CD8-positive, alpha-beta T cell (primary cell): ENCODE measurements at regions of chr11 and their contacts with region 1.

Region 1: DNA sequence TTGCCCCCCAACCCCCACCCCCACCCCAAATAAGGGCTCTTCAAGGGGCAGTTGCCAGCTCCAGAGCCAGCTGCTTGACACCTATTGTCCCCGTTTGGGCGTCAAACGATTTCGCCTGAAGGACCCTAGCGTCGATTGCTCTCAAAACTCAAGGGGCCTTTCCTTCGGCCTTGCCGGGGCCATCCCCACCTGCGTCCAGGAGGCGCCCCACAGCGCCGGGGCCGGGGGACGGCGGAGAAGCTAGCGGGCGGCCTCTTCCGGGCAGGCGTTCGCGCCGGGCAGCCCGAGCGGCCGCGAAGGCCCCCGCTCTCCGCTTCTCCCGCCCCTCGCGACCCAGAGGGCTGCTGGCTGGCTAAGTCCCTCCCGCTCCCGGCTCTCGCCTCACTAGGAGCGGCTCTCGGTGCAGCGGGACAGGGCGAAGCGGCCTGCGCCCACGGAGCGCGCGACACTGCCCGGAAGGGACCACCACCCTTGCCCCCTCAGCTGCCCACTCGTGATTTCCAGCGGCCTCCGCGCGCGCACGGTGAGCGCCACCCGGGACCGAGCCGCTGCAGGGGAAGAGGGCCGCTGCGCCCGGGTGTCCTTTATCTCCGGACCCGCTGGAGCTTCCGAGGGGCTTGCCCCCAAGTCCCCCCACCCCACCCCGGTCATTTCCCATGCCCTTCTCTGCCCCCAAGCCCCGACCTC is at the start of gene CAPRIN1:
- DNase-seq: peak; percentile 71 to 93 (median 83)
- ATAC-seq: peak; percentile 70
- H3K4me3 ChIP-seq: peak within 1 kb of the TSS; percentile 79 to 85
- H3K4me3 Mint-ChIP-seq: peak within 1 kb of the TSS; percentile 98
- H3K27ac ChIP-seq: peak within 1 kb of the TSS; percentile 98 to 99
- H3K27ac Mint-ChIP-seq: peak within 1 kb of the TSS; percentile 96
- H3K4me1 ChIP-seq: peaks cover 35% of the 10 kb centered on the region
- H3K4me1 Mint-ChIP-seq: peaks cover 29% of the 10 kb centered on the region
- H3K27me3 ChIP-seq: no peaks in the 10 kb centered on the region
- H3K27me3 Mint-ChIP-seq: peaks cover 3% of the 10 kb centered on the region
- CTCF ChIP-seq: no peak
- total RNA-seq, gene CAPRIN1: 92.8 to 102 TPM

Region 2: GRCh38 chr11:32583459-32584271 is 1467.8 kb before region 1 on chr11 and contains the start of gene EIF3M:
- CTCF ChIA-PET with region 1: no interaction called
- POLR2A ChIA-PET with region 1: no interaction called
- intact Hi-C with region 1: loop called in 1 of 2 experiments (anchors 10 kb)
- DNase-seq: peak; percentile 91 to 98 (median 95)
- ATAC-seq: peak; percentile 98
- H3K4me3 ChIP-seq: peak within 1 kb of the TSS; percentile 80 to 93
- H3K4me3 Mint-ChIP-seq: peak within 1 kb of the TSS; percentile 99
- H3K27ac ChIP-seq: peak within 1 kb of the TSS; percentile 81 to 86
- H3K27ac Mint-ChIP-seq: peak within 1 kb of the TSS; percentile 99
- H3K4me1 ChIP-seq: peaks cover 29% of the 10 kb centered on the region
- H3K4me1 Mint-ChIP-seq: peaks cover 39% of the 10 kb centered on the region
- H3K27me3 ChIP-seq: no peaks in the 10 kb centered on the region
- H3K27me3 Mint-ChIP-seq: no peaks in the 10 kb centered on the region
- CTCF ChIP-seq: no peak
- total RNA-seq, gene EIF3M: 269 to 274 TPM

Region 3: DNA sequence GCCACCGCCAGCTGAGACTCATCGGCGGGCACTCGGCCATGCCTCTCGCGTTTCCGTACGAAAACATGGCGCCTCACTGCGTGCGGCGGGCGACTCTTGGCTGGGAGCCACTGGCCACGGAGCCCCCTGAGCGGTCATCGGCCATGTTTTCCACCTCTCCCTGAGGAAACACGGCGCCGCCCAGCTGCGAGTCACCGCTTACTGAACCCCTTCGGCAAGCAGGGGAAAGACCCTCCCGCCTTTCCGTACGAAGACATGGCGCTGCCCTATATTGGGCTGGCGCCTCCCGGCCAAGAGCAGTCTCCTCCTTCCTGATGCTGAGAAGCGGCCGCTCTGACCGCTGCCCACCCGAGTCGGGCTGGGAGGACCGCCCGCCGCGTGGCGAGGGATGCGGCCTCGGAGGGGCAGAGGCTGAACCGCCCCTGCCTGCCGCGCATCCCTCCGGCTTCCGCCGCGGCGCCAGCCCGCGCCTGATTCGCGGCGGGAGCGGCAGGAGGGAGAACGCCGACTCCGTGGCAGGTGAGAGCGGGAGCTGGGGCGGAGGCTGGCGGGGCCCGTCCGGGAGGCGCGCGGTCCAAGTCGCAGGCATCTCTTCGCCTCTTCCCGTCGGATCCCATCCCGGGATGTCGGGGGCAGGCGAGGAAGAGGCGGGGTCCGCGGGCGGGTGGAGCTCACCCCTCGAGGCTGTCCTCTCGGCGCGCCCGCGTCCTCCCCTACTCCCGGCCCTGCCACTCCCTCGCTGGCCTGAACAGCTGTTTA is 1012.0 kb before region 1 on chr11 and contains the start of gene TCP11L1:
- CTCF ChIA-PET with region 1: no interaction called
- POLR2A ChIA-PET with region 1: no interaction called
- intact Hi-C with region 1: loop called (anchors 5 kb)
- DNase-seq: peak; percentile 60 to 89 (median 83)
- ATAC-seq: peak; percentile 81
- H3K4me3 ChIP-seq: peak within 1 kb of the TSS; percentile 98
- H3K4me3 Mint-ChIP-seq: peak within 1 kb of the TSS; percentile 95
- H3K27ac ChIP-seq: peak within 1 kb of the TSS; percentile 71 to 86
- H3K27ac Mint-ChIP-seq: peak within 1 kb of the TSS; percentile 91
- H3K4me1 ChIP-seq: peaks cover 10% of the 10 kb centered on the region
- H3K4me1 Mint-ChIP-seq: peaks cover 20% of the 10 kb centered on the region
- H3K27me3 ChIP-seq: no peaks in the 10 kb centered on the region
- H3K27me3 Mint-ChIP-seq: no peaks in the 10 kb centered on the region
- CTCF ChIP-seq: no peak
- total RNA-seq, gene TCP11L1: 10.9 to 12.3 TPM

Region 4: DNA sequence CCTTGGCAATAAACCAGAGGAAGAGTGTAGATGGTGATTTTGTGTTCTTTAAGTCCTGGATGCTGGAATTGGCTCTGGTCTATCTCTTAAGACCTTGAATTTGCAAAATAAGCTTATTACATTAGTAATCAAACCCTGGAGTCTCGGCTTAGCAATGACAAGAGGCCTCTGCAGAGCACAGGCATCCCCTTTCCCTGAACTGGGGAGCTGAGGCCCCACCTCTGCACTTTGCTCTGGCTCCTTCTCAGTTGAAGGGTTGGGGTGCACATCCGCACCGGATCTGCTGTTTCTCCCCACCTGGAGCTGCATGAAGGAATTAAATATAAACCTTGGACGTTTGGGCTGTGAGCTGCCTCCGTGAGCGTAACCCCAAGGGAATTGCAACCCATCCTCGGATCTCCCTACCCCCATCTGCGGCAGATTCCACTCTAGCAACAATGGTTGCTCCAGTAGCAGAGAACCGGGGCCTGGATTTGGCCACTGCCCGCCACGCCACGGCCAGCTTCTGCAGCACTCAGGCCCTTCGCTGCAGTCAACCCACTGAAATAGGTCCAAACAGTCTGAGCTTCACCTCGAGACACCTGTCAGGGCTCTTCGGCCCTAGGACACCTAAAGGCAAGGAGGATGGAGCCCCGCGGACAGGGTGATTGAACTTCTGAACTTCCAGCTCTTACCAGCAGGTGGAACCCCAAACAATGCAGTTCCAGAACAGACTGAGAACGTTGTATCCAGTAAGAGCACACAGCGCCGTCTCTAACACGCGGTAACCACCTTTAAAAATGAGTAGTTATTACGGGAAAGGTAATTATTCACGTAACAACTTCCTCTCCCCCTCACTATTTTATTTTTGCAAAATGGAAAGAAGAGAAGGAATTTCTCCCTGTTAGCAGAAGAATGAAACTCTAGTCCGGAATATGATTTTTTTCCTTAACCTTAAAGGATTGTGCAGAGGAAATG is 54.7 kb before region 1 on chr11:
- CTCF ChIA-PET with region 1: interaction called, 4 read pairs
- POLR2A ChIA-PET with region 1: no interaction called
- intact Hi-C with region 1: loop called (anchors 2 to 5 kb)
- DNase-seq: peak; percentile 50 to 84 (median 75)
- ATAC-seq: peak; percentile 100
- H3K4me3 ChIP-seq: no peak overlapping the region
- H3K4me3 Mint-ChIP-seq: peak overlapping the region; percentile 59
- H3K27ac ChIP-seq: no peak overlapping the region
- H3K27ac Mint-ChIP-seq: no peak overlapping the region
- H3K4me1 ChIP-seq: peaks cover 7% of the 10 kb centered on the region
- H3K4me1 Mint-ChIP-seq: peaks cover 13% of the 10 kb centered on the region
- H3K27me3 ChIP-seq: peaks cover 0 to 2% of the 10 kb centered on the region in 2 experiments
- H3K27me3 Mint-ChIP-seq: peaks cover 18% of the 10 kb centered on the region
- CTCF ChIP-seq: peak; percentile 75

Region 5: GRCh38 chr11:34021977-34022735 is 29.3 kb before region 1 on chr11:
- CTCF ChIA-PET with region 1: no interaction called
- POLR2A ChIA-PET with region 1: no interaction called
- intact Hi-C with region 1: no loop called
- DNase-seq: no peak
- ATAC-seq: no peak
- H3K4me3 ChIP-seq: no peak overlapping the region
- H3K4me3 Mint-ChIP-seq: no peak overlapping the region
- H3K27ac ChIP-seq: no peak overlapping the region
- H3K27ac Mint-ChIP-seq: no peak overlapping the region
- H3K4me1 ChIP-seq: no peaks in the 10 kb centered on the region
- H3K4me1 Mint-ChIP-seq: no peaks in the 10 kb centered on the region
- H3K27me3 ChIP-seq: no peaks in the 10 kb centered on the region
- H3K27me3 Mint-ChIP-seq: no peaks in the 10 kb centered on the region
- CTCF ChIP-seq: no peak

Region 6: DNA sequence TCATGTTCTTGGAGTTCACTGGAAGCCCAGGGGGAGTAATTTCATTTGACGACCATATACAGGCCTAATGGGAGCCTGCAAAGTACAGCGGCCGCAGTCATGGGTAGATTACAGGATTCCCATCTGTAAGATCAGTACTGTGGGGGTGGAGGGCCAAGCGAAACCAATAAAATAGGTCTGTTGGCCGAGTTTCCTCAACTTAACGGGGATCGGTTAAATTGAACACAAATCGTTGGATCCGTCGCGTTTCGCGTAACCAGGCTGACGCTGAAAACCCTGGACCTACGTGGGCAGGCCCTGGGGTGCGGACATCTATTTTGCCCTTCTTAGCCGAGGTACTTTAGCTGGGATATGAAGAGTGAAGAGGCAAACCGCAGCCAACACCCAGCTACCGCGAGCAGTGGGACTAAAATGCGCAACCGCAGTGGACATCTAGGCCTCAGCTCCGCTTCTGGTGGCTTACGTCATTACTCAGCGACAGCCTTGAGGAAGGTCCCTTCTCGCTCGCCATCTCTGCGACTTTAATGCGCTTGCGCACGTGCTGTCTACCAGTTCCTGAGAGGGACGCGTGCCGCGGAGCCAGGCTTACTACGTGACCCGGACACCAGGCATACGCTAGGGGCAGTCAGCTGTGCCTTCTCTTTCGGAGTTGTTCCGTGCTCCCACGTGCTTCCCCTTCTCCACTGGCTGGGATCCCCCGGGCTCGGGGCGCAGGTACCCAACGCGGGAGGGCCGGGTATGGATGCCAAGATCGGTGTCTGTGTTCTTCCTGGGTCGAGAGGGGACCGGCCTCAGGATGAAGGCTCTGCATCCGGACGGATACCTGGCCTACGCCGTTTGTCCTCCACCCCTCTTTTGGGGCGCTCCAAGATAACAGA is 53.8 kb after region 1 on chr11 and contains the start of gene NAT10:
- CTCF ChIA-PET with region 1: interaction called, 4 read pairs
- POLR2A ChIA-PET with region 1: interaction called, 46 read pairs
- intact Hi-C with region 1: loop called (anchors 1 kb)
- DNase-seq: peak; percentile 93 to 100 (median 98)
- ATAC-seq: peak; percentile 93
- H3K4me3 ChIP-seq: peak within 1 kb of the TSS; percentile 70 to 94
- H3K4me3 Mint-ChIP-seq: peak within 1 kb of the TSS; percentile 97
- H3K27ac ChIP-seq: peak within 1 kb of the TSS; percentile 81 to 90
- H3K27ac Mint-ChIP-seq: peak within 1 kb of the TSS; percentile 99
- H3K4me1 ChIP-seq: peaks cover 27% of the 10 kb centered on the region
- H3K4me1 Mint-ChIP-seq: peaks cover 60% of the 10 kb centered on the region
- H3K27me3 ChIP-seq: no peaks in the 10 kb centered on the region
- H3K27me3 Mint-ChIP-seq: no peaks in the 10 kb centered on the region
- CTCF ChIP-seq: no peak
- total RNA-seq, gene NAT10: 51.1 to 59.6 TPM

Region 7: DNA sequence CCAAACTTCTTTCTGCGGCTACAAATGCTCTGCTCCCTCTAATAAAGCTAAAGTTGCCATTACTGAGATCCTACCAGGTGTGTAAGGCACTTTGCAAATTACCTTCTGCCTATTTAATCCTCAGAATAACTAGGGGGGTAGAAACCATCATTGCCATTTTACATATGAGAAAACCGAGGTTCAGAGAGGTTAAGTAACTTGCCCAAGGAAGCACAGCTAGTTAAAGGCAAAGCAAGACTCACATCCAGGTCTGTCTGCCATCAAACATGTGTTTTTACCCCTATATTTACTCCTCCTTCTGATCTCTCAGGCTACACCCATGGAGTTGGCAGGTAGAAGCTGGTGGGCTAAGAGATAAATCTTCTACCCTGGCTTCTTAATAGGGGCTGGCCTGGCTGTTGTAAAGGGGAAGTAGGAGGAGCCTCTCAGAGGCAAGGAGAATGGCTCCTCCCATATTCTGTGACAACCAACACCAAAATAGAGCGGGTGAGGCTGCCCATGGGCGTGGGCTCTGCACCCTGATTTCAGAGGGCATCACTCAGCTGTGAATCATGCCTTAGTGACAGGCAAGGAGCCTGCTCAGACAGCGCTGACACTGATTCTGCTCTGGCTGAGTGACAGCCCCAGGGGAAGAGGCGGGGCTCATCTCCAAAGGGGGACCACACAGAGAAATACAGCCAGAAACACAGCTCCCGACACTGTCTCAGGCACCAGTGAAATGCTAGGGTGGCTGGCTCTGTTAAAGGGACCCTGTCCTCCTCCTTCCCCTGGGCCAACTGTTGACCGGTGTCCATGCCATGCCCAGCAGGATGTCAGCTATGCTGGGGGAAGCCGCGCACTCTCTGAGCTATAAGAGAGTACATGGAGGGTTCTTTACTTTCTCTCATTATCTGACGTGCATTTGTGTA is 199.5 kb after region 1 on chr11:
- CTCF ChIA-PET with region 1: no interaction called
- POLR2A ChIA-PET with region 1: no interaction called
- intact Hi-C with region 1: loop called (anchors 2 to 5 kb)
- DNase-seq: peak; percentile 33 to 90 (median 79)
- ATAC-seq: peak; percentile 94
- H3K4me3 ChIP-seq: peak overlapping the region; percentile 1 to 47
- H3K4me3 Mint-ChIP-seq: peak overlapping the region; percentile 66
- H3K27ac ChIP-seq: no peak overlapping the region
- H3K27ac Mint-ChIP-seq: peak overlapping the region; percentile 84
- H3K4me1 ChIP-seq: peaks cover 51% of the 10 kb centered on the region
- H3K4me1 Mint-ChIP-seq: peaks cover 54% of the 10 kb centered on the region
- H3K27me3 ChIP-seq: no peaks in the 10 kb centered on the region
- H3K27me3 Mint-ChIP-seq: peaks cover 3% of the 10 kb centered on the region
- CTCF ChIP-seq: no peak